ENCODE measurements at regions of chr9 and their contacts with region 1.

Region 1: GRCh38 chr9:22452415-22453010 is 5.9 kb downstream of the DMRTA1 start:
- DNase-seq: peak; percentile 55
- ATAC-seq: peak; percentile 66

Region 2: DNA sequence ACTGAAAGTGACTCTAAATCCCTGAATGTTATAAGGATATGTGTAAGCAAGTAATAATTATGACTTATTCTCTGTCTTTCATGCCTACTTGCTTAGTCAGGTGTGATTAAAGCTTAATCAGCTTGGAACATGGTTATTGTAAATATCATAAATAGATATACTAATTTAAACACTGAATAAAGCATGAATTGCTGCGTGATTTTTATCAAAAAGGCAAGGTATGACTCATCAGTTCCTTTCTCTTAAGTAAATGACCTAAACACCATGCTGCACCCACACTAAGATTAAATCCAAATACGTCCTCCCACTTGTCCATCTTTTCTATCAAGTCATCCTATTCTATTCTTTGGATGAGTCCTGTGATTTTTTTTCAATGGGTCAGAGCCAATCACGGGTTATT is 774.7 kb before region 1 on chr9:
- intact Hi-C with region 1: no loop called
- DNase-seq: no peak
- ATAC-seq: no peak

Region 3: GRCh38 chr9:22169727-22170503 is 282.6 kb before region 1 on chr9:
- intact Hi-C with region 1: no loop called
- DNase-seq: no peak
- ATAC-seq: no peak

Region 4: GRCh38 chr9:22307013-22307711 is 145.4 kb before region 1 on chr9:
- intact Hi-C with region 1: loop called (anchors 5 kb)
- DNase-seq: no peak
- ATAC-seq: peak; percentile 57

Region 5: GRCh38 chr9:22512495-22512894 is 60.0 kb after region 1 on chr9:
- intact Hi-C with region 1: no loop called
- DNase-seq: no peak
- ATAC-seq: no peak